ENCODE measurements at regions of chr19 and their contacts with region 1.

Region 1: DNA sequence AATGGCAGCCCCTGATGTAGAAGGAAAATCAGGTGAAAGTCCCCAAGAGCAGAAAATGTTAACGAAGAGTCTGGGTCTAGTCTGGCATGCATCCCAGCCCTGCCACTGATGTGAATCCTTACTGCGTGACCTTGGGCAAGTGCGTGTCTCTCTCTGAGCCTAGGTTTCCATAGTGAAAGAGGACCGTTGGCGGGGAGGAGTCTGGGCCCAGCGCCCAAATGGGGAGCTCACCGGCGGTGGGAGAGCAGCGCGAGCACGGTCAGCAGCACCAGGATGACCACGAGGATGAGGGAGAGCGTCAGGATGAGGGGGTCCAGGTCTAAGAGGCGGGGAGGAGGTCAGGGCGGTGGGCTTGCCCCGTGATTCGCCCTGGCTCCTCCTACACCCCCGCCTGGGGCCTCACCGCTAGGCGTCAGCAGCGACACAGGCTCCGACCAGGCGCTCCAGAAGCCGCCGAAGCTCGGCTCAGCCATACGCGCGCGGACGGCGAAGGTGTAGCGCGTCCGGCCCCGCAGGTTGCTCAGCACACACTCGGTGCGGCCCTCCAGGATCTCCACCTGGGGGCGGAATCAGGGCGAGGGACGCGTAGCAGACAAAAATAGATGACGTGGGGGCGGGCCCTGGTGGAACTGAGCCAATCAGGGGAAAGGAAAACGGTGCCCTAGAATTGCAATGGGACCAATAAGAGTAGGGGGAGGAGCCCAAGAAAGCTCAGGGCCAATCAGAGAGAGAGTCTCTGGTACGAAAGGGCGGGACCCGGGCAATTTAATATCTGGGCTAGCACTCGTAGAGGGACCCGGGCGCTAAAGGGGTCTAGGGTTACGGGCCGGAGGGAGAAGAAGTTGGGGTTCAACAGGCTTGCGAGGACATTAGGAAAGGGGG is 3.2 kb downstream of the EPOR start:
- DNase-seq: peak; percentile 100
- H3K27ac ChIP-seq: peak overlapping the region; percentile 96
- CTCF ChIP-seq: peak; percentile 87

Region 2: DNA sequence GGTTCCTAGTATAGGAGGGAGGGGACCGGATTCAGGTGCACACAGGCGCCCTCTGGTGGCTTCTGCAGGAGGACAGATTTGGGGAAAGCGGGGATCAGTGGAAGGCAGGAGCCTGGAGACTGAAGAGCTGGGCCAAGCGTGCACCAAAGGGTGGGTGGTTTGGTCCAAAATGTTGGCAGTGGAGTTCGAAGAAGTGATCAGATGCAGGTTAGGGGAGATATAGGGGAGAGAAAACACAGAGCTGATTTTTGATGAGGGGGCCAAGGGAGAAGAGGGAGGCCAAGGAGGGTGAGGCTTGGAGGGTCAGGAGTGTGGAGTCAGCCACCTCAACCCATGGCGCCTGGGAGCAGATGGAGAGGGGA is 516.4 kb before region 1 on chr19:
- CTCF ChIA-PET with region 1: no interaction called
- POLR2A ChIA-PET with region 1: interaction called, 10 read pairs
- DNase-seq: peak; percentile 92
- H3K27ac ChIP-seq: peak overlapping the region; percentile 45
- CTCF ChIP-seq: peak; percentile 93

Region 3: DNA sequence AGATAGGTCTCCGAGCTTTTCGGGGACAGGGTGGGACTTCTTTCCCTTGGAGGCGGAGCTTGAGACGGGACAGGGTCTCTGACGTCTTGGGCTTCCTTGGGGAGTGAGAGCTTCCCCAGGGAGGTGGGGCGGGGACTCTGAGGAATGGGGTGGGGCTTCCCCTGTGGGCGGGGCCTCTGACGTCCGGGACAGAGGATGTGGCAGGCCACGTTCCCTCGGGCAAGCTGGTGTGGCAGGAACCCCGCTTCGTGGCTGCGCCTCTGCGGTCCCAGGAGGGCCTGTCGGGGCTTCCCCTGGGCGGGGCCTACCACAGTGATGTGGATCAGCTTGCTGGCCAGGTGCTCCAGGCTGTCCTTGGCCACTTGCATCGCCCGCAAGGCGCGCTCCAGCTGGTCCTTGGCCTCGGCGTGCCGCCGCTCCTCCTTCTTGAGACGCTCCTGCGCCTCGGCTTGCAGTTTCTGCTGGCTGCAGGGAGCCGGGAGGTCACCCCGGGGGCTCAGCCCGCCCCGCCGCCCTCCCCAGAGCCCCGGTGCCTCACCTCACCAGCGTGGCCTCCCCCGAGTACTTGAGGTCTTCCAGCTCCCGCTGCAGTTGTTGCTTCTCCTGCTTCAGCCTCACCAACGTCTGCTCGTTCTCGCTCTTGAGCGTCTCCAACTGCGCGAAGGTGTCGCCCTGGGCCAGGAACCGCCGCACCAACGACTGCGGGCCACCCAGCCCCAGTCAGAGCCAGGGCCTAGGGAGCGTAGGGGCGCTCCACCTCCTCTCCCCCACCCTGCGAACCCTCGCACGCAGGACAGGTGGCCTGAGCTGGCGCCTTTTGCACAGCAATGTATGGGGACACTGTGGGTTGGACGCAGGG is 41.5 kb after region 1 on chr19:
- CTCF ChIA-PET with region 1: interaction called, 5 read pairs
- POLR2A ChIA-PET with region 1: interaction called, 10 read pairs
- DNase-seq: peak; percentile 94
- H3K27ac ChIP-seq: peak overlapping the region; percentile 70
- CTCF ChIP-seq: no peak

Region 4: GRCh38 chr19:11482384-11483050 is 101.6 kb after region 1 on chr19:
- CTCF ChIA-PET with region 1: interaction called, 17 read pairs
- POLR2A ChIA-PET with region 1: interaction called, 10 read pairs
- DNase-seq: peak; percentile 84
- H3K27ac ChIP-seq: no peak overlapping the region
- CTCF ChIP-seq: peak; percentile 94

Measured in RWPE1 (cell line).